ENCODE measurements at regions of chr13 and their contacts with region 1.

Region 1: GRCh38 chr13:75760131-75761021 is 124.2 kb downstream of the LMO7 start:
- DNase-seq: peak; percentile 47
- H3K4me3 Mint-ChIP-seq: peak overlapping the region; percentile 74
- H3K27ac Mint-ChIP-seq: peak overlapping the region; percentile 94
- H3K4me1 Mint-ChIP-seq: peaks cover 62% of the 10 kb centered on the region
- H3K27me3 Mint-ChIP-seq: no peaks in the 10 kb centered on the region

Region 2: GRCh38 chr13:75656425-75656989 is 103.9 kb before region 1 on chr13:
- CTCF ChIA-PET with region 1: no interaction called
- DNase-seq: no peak
- H3K4me3 Mint-ChIP-seq: no peak overlapping the region
- H3K27ac Mint-ChIP-seq: no peak overlapping the region
- H3K4me1 Mint-ChIP-seq: no peaks in the 10 kb centered on the region
- H3K27me3 Mint-ChIP-seq: no peaks in the 10 kb centered on the region

Region 3: DNA sequence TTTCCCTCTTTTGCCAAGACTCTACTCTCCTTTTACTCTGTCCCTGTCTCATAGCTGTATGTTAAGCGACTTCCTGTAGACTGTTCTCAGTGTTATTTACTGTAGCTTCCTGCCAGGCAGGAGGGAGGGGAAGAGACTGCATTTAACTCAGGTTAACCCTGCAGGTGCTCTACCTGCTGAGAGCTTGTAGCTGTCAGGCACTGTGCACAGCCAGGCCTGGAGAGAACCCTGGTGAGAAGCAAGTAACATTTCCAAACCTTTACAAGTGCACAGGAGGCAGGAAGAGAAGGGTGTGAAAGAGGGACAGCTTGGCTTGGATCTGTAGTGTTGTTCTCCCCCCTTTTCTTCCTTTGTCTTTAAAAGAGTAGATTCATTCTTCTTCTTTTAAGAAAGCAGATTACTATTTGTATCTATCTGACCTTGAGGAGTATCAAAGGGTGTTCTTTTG is 42.8 kb after region 1 on chr13:
- CTCF ChIA-PET with region 1: interaction called, 12 read pairs
- DNase-seq: peak; percentile 49
- H3K4me3 Mint-ChIP-seq: no peak overlapping the region
- H3K27ac Mint-ChIP-seq: peak overlapping the region; percentile 4
- H3K4me1 Mint-ChIP-seq: peaks cover 33% of the 10 kb centered on the region
- H3K27me3 Mint-ChIP-seq: no peaks in the 10 kb centered on the region

Region 4: GRCh38 chr13:75847588-75847987 is 87.2 kb after region 1 on chr13:
- CTCF ChIA-PET with region 1: no interaction called
- DNase-seq: no peak
- H3K4me3 Mint-ChIP-seq: no peak overlapping the region
- H3K27ac Mint-ChIP-seq: no peak overlapping the region
- H3K4me1 Mint-ChIP-seq: no peaks in the 10 kb centered on the region
- H3K27me3 Mint-ChIP-seq: no peaks in the 10 kb centered on the region

Region 5: GRCh38 chr13:75870397-75870903 is 110.1 kb after region 1 on chr13:
- CTCF ChIA-PET with region 1: interaction called, 35 read pairs
- DNase-seq: peak; percentile 22
- H3K4me3 Mint-ChIP-seq: peak overlapping the region; percentile 61
- H3K27ac Mint-ChIP-seq: peak overlapping the region; percentile 93
- H3K4me1 Mint-ChIP-seq: peaks cover 36% of the 10 kb centered on the region
- H3K27me3 Mint-ChIP-seq: peaks cover 15% of the 10 kb centered on the region

Region 6: GRCh38 chr13:75876360-75877050 is 116.1 kb after region 1 on chr13:
- CTCF ChIA-PET with region 1: interaction called, 35 read pairs
- DNase-seq: peak; percentile 68
- H3K4me3 Mint-ChIP-seq: peak overlapping the region; percentile 33
- H3K27ac Mint-ChIP-seq: peak overlapping the region; percentile 30
- H3K4me1 Mint-ChIP-seq: peaks cover 26% of the 10 kb centered on the region
- H3K27me3 Mint-ChIP-seq: no peaks in the 10 kb centered on the region

Measured in activated naive CD4-positive, alpha-beta T cell treated with anti-CD3 and anti-CD28 coated beads, Interleukin-2, amount 10 ng/mL, durations not matched to agents 7 days and 5 days (primary cell).